AG04449 (cell line): ENCODE measurements at regions of chr10 and their contacts with region 1.

Region 1: GRCh38 chr10:102312683-102313082 is 67.4 kb downstream of the GBF1 start:
- DNase-seq: no peak
- H3K4me3 ChIP-seq: no peak overlapping the region
- CTCF ChIP-seq: no peak

Region 2: GRCh38 chr10:102302611-102303010 is 10.1 kb before region 1 on chr10:
- CTCF ChIA-PET with region 1: interaction called, 10 read pairs
- POLR2A ChIA-PET with region 1: interaction called, 3 read pairs
- DNase-seq: no peak
- H3K4me3 ChIP-seq: no peak overlapping the region
- CTCF ChIP-seq: no peak

Region 3: GRCh38 chr10:102476466-102477141 is 163.9 kb after region 1 on chr10:
- CTCF ChIA-PET with region 1: no interaction called
- POLR2A ChIA-PET with region 1: no interaction called
- DNase-seq: no peak
- H3K4me3 ChIP-seq: no peak overlapping the region
- CTCF ChIP-seq: no peak